H1 (cell line): ENCODE measurements at regions of chr14 and their contacts with region 1.

Region 1: DNA sequence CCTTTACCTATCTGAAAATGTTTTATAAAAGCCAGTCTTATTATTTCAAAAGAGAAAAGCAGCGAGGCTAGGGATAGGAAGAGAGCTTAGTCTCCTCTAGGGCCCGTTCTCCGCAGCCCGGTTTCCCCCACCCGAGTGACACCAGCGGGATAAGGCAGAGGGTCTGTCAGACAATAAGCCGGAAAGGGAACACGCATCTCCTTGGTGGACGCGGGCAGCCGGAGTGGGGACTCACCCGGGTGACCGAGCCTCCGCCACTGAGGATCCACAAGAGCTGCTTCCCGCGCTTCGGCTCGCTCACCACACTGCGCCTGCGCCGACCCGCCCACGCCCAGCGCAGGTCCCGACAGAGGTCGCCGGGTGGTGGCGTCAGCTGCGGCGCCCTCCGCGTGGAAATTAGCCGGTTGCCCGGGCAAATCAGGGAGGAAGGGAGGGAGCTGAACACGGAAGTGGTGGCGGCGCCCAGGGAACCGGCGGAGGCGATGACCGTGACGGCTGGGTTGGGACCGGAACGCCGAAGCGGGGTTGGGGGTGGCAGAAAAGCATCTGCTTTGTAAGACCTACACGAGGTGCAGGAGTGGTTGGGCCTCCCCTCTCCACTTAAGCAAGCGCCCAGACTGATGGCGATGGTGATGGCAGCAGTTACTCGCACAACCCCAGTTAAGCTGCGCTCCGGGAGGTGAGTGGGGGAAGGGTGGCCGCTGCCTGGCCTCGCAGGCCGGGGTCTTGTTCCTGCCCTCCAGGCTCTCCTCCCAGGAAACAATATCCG is at the starts of genes SOCS4 and WDHD1:
- DNase-seq: peak; percentile 82 to 98
- H3K4me3 ChIP-seq: peak within 1 kb of the TSS; percentile 89 to 96 (median 94)
- H3K27ac ChIP-seq: peak within 1 kb of the TSS; percentile 97
- H3K4me1 ChIP-seq: peaks cover 0 to 10% (median 1%) of the 10 kb centered on the region in 4 experiments; a peak in 3 of 7 replicates
- H3K27me3 ChIP-seq: no peaks in the 10 kb centered on the region
- CTCF ChIP-seq: peak in 1 of 3 experiments; percentile 7; a peak in 1 of 4 replicates
- EP300 ChIP-seq: no peak
- POLR2A ChIP-seq: peak; percentile 71 to 98
- RAD21 ChIP-seq: no peak
- total RNA-seq, gene SOCS4: 24.8 and 31.5 TPM in 2 replicates
- total RNA-seq, gene WDHD1: 79.9 and 87.9 TPM in 2 replicates

Region 2: GRCh38 chr14:54579621-54580020 is 447.4 kb before region 1 on chr14:
- CTCF ChIA-PET with region 1: no interaction called
- POLR2A ChIA-PET with region 1: no interaction called
- DNase-seq: no peak
- H3K4me3 ChIP-seq: no peak overlapping the region
- H3K27ac ChIP-seq: no peak overlapping the region
- H3K4me1 ChIP-seq: no peaks in the 10 kb centered on the region
- H3K27me3 ChIP-seq: no peaks in the 10 kb centered on the region
- CTCF ChIP-seq: no peak
- EP300 ChIP-seq: no peak
- POLR2A ChIP-seq: no peak
- RAD21 ChIP-seq: no peak

Region 3: GRCh38 chr14:54902521-54903420 is 124.2 kb before region 1 on chr14 and contains the start of gene GCH1:
- CTCF ChIA-PET with region 1: no interaction called
- POLR2A ChIA-PET with region 1: interaction called, 15 read pairs
- DNase-seq: peak; percentile 25 to 91
- H3K4me3 ChIP-seq: peak within 1 kb of the TSS; percentile 68 to 86 (median 72)
- H3K27ac ChIP-seq: no peak within 1 kb of the TSS
- H3K4me1 ChIP-seq: peaks cover 0 to 5% (median 1%) of the 10 kb centered on the region in 4 experiments; a peak in 6 of 7 replicates
- H3K27me3 ChIP-seq: peaks cover 2 to 20% (median 17%) of the 10 kb centered on the region in 4 experiments
- CTCF ChIP-seq: peak in 2 of 3 experiments; percentile 26 to 44; a peak in 2 of 4 replicates
- EP300 ChIP-seq: no peak
- POLR2A ChIP-seq: peak; percentile 96 to 97
- RAD21 ChIP-seq: peak in 1 of 2 experiments; percentile 15; a peak in 1 of 4 replicates
- total RNA-seq, gene GCH1: 7.9 and 8.1 TPM in 2 replicates

Region 4: DNA sequence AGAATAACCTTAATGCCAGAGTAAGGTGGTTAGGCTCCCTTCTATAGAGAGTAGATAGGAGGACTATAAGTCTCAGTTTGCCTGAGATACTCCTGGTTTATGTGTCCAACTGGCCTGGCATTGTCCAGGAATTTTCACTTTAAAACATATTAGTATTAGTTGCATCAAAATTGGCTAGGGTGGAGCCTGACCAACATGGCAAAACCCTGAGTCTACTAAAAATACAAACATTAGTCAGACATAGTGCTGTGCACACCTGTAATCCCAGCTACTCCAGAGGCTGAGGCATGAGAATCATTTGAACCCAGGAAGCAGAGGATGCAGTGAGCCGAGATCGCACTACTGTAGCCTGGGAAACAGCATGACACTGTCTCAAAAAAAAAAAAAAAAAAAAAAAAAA is 12.0 kb before region 1 on chr14:
- CTCF ChIA-PET with region 1: interaction called, 3 read pairs
- POLR2A ChIA-PET with region 1: interaction called, 29 read pairs
- DNase-seq: no peak
- H3K4me3 ChIP-seq: no peak overlapping the region
- H3K27ac ChIP-seq: no peak overlapping the region
- H3K4me1 ChIP-seq: peaks cover 0 to 2% (median 0%) of the 10 kb centered on the region in 4 experiments; a peak in 1 of 7 replicates
- H3K27me3 ChIP-seq: no peaks in the 10 kb centered on the region
- CTCF ChIP-seq: no peak
- EP300 ChIP-seq: no peak
- POLR2A ChIP-seq: no peak
- RAD21 ChIP-seq: no peak

Region 5: GRCh38 chr14:55038708-55039107 is 11.7 kb after region 1 on chr14:
- CTCF ChIA-PET with region 1: interaction called, 4 read pairs
- POLR2A ChIA-PET with region 1: interaction called, 11 read pairs
- DNase-seq: no peak
- H3K4me3 ChIP-seq: no peak overlapping the region
- H3K27ac ChIP-seq: no peak overlapping the region
- H3K4me1 ChIP-seq: no peaks in the 10 kb centered on the region
- H3K27me3 ChIP-seq: peaks cover 0 to 2% (median 1%) of the 10 kb centered on the region in 4 experiments; a peak in 3 of 7 replicates
- CTCF ChIP-seq: no peak
- EP300 ChIP-seq: no peak
- POLR2A ChIP-seq: no peak
- RAD21 ChIP-seq: no peak

Region 6: GRCh38 chr14:55059333-55059732 is 32.4 kb after region 1 on chr14:
- CTCF ChIA-PET with region 1: no interaction called
- POLR2A ChIA-PET with region 1: interaction called, 101 read pairs
- DNase-seq: no peak
- H3K4me3 ChIP-seq: no peak overlapping the region
- H3K27ac ChIP-seq: no peak overlapping the region
- H3K4me1 ChIP-seq: no peaks in the 10 kb centered on the region
- H3K27me3 ChIP-seq: no peaks in the 10 kb centered on the region
- CTCF ChIP-seq: no peak
- EP300 ChIP-seq: no peak
- POLR2A ChIP-seq: no peak
- RAD21 ChIP-seq: no peak

Region 7: DNA sequence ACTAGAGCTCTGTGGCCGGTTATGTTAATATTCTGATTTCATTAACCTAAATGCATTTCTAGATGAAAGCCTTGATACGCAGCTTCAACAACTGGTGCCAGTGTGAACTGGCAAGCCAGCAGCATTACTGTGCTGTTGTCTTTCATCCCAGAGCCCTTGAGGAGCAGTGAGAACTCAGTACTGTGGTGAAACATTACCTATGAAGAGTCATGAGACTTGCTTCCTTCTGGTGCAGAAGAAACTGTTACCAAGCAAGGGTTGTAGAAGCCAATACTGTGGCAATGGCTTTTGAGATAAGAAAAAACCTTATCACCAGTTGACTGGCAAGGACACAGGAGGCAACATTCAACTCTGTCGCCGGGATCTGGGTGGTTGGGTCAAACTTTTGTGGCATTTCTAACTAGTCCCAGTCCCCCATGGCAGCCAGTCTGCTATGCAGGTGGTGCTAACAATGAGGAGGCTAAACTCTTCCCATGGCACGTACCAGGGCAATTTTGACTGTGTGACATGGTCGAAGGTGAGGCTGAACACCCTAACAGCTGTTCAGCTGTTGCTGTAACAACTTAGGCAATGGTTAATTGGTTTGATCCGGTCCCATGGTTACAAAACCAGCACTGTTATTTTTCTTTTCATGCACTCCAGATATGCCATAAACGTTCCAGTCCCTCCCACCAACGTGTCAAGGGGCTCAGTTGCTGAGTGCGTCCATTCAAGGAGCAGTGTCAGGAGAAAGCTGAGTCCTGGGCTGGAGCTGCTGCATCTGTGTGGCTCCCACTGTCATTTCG is 89.5 kb after region 1 on chr14:
- CTCF ChIA-PET with region 1: no interaction called
- POLR2A ChIA-PET with region 1: no interaction called
- DNase-seq: no peak
- H3K4me3 ChIP-seq: no peak overlapping the region
- H3K27ac ChIP-seq: no peak overlapping the region
- H3K4me1 ChIP-seq: peaks cover 0 to 3% (median 1%) of the 10 kb centered on the region in 4 experiments; a peak in 3 of 7 replicates
- H3K27me3 ChIP-seq: no peaks in the 10 kb centered on the region; a peak in 1 of 7 replicates
- CTCF ChIP-seq: no peak
- EP300 ChIP-seq: no peak
- POLR2A ChIP-seq: no peak
- RAD21 ChIP-seq: no peak

Region 8: GRCh38 chr14:55599200-55599879 is 572.4 kb after region 1 on chr14:
- CTCF ChIA-PET with region 1: no interaction called
- POLR2A ChIA-PET with region 1: no interaction called
- DNase-seq: no peak
- H3K4me3 ChIP-seq: no peak overlapping the region
- H3K27ac ChIP-seq: no peak overlapping the region
- H3K4me1 ChIP-seq: peaks cover 0 to 7% (median 3%) of the 10 kb centered on the region in 4 experiments; a peak in 4 of 7 replicates
- H3K27me3 ChIP-seq: no peaks in the 10 kb centered on the region
- CTCF ChIP-seq: no peak
- EP300 ChIP-seq: no peak
- POLR2A ChIP-seq: no peak
- RAD21 ChIP-seq: no peak